PC-3 (cell line): ENCODE measurements at regions of chr6 and their contacts with region 1.

Region 1: DNA sequence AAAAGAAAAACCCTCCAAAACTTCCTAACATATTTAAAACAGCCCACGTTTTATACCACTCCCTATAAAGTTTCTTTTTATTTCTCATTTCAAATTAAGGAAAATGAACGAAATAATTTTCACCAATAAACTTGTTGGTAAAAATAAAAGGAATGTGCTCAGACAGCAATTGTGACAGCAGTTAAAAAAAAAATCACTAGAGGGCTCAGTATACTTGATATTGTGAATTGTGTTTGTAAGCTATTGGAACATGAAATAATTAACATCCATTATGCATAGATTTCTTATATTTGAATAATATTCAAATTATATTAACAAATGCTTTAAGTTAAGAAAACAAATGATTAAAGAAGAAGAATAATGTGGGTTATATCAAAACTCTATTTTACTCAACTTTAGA is 105.5 kb downstream of the ASCC3 start:
- DNase-seq: peak; percentile 34
- ATAC-seq: no peak
- H3K4me3 ChIP-seq: no peak overlapping the region
- H3K27ac ChIP-seq: no peak overlapping the region
- H3K4me1 ChIP-seq: peaks cover 9% of the 10 kb centered on the region
- H3K27me3 ChIP-seq: no peaks in the 10 kb centered on the region
- CTCF ChIP-seq: peak; percentile 60

Region 2: DNA sequence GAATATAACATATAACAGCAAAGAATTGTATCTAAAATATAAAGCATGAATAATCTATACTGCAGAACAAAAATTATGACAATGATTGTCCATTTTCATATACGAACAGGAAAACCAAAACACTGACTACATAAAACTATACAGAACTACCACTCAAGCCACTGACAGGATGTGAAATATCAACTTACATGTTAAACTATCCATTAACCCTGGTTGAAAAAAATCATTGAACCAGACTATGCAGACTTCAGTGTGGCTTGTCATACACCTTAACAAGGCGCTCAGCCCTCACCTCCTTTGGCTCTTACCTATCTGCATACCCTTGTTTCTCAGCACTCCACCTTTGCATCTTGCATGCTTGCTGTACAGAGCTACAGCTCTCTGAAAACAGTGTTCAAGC is 70.6 kb after region 1 on chr6:
- CTCF ChIA-PET with region 1: no interaction called
- POLR2A ChIA-PET with region 1: no interaction called
- intact Hi-C with region 1: loop called (anchors 5 kb)
- DNase-seq: peak; percentile 36
- ATAC-seq: peak; percentile 64
- H3K4me3 ChIP-seq: no peak overlapping the region
- H3K27ac ChIP-seq: peak overlapping the region; percentile 79
- H3K4me1 ChIP-seq: peaks cover 30% of the 10 kb centered on the region
- H3K27me3 ChIP-seq: no peaks in the 10 kb centered on the region
- CTCF ChIP-seq: no peak

Region 3: DNA sequence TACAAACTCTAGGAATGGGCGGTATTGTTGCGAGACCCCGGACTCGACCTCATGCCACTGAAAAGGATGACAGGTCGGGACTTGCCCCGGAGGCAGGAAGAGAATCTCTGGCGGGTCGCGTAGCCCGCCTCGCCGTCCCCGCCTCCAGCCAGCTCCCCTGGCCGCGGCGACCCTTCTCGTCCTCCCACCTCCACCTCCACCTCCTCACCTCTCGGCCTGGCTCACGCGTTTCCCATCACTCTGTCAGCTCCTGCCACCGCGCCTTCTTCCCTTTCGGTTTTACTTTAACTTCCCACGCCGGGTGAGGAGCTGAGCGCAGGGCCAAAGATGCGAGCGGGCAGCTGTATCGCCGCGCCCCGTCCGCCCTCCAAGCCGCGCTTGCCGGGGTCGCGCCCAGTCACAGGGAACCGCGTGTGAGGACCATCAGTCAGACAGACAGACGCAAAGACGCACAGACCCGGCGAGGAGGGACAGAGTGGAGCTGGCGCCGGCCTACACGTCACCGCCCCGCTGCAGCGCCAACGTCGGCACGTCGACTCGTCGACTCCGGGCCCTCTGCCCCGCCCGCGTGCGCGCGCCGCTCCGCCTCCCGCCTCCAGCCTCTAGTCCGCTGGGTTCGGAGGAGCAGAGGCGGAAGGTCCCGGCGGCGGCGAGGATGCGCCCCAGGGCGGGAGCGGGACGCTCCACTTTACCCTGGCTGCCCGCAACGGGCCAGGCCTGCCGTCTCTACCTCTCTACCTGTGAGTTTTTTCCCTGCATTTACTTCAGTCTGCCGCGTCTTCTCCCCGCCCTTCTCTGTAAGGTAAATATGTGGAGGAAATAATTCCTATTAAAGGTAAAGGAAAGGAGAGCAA is 105.4 kb after region 1 on chr6 and contains the start of gene ASCC3:
- CTCF ChIA-PET with region 1: no interaction called
- POLR2A ChIA-PET with region 1: no interaction called
- intact Hi-C with region 1: loop called (anchors 10 kb)
- DNase-seq: peak; percentile 88
- ATAC-seq: peak; percentile 96
- H3K4me3 ChIP-seq: peak within 1 kb of the TSS; percentile 96
- H3K27ac ChIP-seq: peak within 1 kb of the TSS; percentile 81
- H3K4me1 ChIP-seq: peaks cover 20% of the 10 kb centered on the region
- H3K27me3 ChIP-seq: no peaks in the 10 kb centered on the region
- CTCF ChIP-seq: no peak
- total RNA-seq, gene ASCC3: 27.7 and 29.8 TPM in 2 replicates